ENCODE measurements at regions of chr11 and their contacts with region 1.

Region 1: GRCh38 chr11:20110908-20111669 is 49.2 kb downstream of the DBX1 start:
- DNase-seq: peak; percentile 75
- CTCF ChIP-seq: peak; percentile 91

Region 2: GRCh38 chr11:19931141-19931770 is 179.8 kb before region 1 on chr11:
- in situ Hi-C with region 1: no loop called
- DNase-seq: no peak
- CTCF ChIP-seq: no peak

Region 3: DNA sequence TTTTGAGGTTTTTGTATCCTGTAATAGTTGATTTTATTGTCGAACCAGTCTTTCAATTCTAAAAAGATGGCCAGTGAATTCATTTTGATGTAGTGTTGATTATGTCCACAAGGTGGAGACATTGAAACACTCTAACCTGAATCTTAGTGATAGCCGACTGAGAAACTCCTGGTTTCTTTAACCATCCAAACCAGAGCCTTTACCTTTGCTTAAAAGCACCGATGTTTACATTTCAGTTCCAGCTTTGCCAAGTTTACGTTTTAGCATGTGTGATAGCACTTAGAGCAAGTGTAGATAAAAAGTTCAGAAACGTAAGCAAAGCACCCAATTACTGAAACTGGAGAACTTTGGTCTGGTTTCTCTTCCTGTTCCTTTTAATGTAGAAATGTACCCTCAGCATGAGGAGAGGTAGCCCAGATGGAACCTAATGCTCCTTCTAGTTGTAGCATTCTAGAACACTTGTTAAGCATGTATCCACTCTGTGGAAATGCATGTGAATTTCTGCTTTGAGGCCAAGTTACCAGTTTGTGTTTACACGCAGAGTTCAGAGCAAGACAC is 159.5 kb before region 1 on chr11:
- in situ Hi-C with region 1: loop called (anchors 10 kb)
- DNase-seq: peak; percentile 53
- CTCF ChIP-seq: peak; percentile 23